ENCODE measurements at regions of chr4 and their contacts with region 1.

Region 1: DNA sequence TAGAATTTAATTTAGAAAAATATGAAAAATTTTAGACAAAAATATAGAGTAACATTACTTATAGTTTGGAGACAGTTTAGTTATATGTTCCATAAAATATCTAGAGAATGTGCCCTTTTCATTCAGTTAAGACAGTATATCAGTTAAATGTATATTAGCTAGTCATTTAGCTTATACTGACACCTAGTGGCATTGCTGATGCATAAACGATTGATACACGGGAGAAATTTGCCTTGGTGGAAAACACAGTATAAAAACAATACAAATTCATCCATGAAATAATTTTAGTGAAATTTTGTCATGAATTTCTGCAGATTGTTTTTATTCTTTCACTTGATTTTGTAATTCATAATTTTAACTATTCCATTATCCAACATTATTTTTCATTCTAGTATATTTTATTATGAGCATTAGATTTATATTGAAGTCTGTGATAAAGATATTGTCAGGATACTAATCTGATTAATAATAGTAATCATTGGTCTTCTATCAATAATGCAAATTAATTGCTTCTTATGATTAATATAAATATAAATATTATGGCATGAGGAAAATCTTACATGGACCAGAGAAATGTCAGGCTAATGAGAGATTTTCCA is 219.0 kb downstream of the TLL1 start:
- DNase-seq: no peak
- ATAC-seq: peak; percentile 78
- H3K4me3 ChIP-seq: no peak overlapping the region
- H3K27ac ChIP-seq: no peak overlapping the region
- H3K4me1 ChIP-seq: no peaks in the 10 kb centered on the region
- H3K27me3 ChIP-seq: no peaks in the 10 kb centered on the region
- CTCF ChIP-seq: peak; percentile 57 to 64 (median 63); a peak in 5 of 6 replicates
- EP300 ChIP-seq: no peak
- POLR2A ChIP-seq: no peak
- RAD21 ChIP-seq: peak; percentile 71

Region 2: DNA sequence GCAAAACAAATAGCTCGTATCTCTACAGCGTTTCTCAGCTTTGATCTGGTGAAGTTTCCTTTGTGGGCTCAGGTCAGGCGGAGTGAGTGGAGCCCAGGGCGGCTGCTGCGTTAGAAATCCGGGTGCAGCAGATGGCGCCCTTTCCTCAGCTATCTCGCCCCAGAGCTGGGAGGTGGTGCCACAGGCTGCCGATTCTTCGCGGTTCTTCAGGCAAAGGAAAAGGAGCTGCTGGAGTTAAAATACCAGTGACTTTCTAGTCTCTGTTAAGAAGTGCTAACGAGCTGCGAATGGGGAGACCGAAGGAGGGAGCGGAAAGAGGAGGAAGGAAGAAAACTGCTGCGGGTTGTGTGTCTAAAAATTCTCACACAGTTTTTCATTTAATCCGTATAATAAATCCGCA is 598.7 kb before region 1 on chr4:
- CTCF ChIA-PET with region 1: interaction called, 40 read pairs
- POLR2A ChIA-PET with region 1: no interaction called
- RAD21 ChIA-PET with region 1: interaction called, 18 read pairs
- SMC1A ChIA-PET with region 1: interaction called, 25 read pairs
- in situ Hi-C with region 1: no loop called
- intact Hi-C with region 1: loop called (anchors 1 kb)
- DNase-seq: no peak
- ATAC-seq: peak; percentile 98
- H3K4me3 ChIP-seq: no peak overlapping the region
- H3K27ac ChIP-seq: no peak overlapping the region
- H3K4me1 ChIP-seq: no peaks in the 10 kb centered on the region
- H3K27me3 ChIP-seq: no peaks in the 10 kb centered on the region
- CTCF ChIP-seq: peak; percentile 68 to 85 (median 73)
- EP300 ChIP-seq: no peak
- POLR2A ChIP-seq: no peak
- RAD21 ChIP-seq: peak; percentile 80

Region 3: GRCh38 chr4:165537028-165537648 is 554.9 kb before region 1 on chr4:
- CTCF ChIA-PET with region 1: interaction called, 34 read pairs
- POLR2A ChIA-PET with region 1: no interaction called
- RAD21 ChIA-PET with region 1: interaction called, 20 read pairs
- SMC1A ChIA-PET with region 1: interaction called, 12 read pairs
- in situ Hi-C with region 1: loop called (anchors 5 kb)
- intact Hi-C with region 1: loop called (anchors 1 kb)
- DNase-seq: no peak
- ATAC-seq: peak; percentile 79
- H3K4me3 ChIP-seq: no peak overlapping the region
- H3K27ac ChIP-seq: no peak overlapping the region
- H3K4me1 ChIP-seq: no peaks in the 10 kb centered on the region
- H3K27me3 ChIP-seq: no peaks in the 10 kb centered on the region; a peak in 1 of 4 replicates
- CTCF ChIP-seq: peak; percentile 45 to 67 (median 54); a peak in 5 of 6 replicates
- EP300 ChIP-seq: no peak
- POLR2A ChIP-seq: no peak
- RAD21 ChIP-seq: peak; percentile 69

Region 4: GRCh38 chr4:165864271-165864670 is 227.7 kb before region 1 on chr4:
- CTCF ChIA-PET with region 1: interaction called, 7 read pairs
- POLR2A ChIA-PET with region 1: no interaction called
- RAD21 ChIA-PET with region 1: interaction called, 5 read pairs
- SMC1A ChIA-PET with region 1: interaction called, 3 read pairs
- in situ Hi-C with region 1: no loop called
- intact Hi-C with region 1: loop called (anchors 5 kb)
- DNase-seq: no peak
- ATAC-seq: peak; percentile 46; the same call in 2 of the 3 replicates
- H3K4me3 ChIP-seq: no peak overlapping the region
- H3K27ac ChIP-seq: no peak overlapping the region
- H3K4me1 ChIP-seq: no peaks in the 10 kb centered on the region
- H3K27me3 ChIP-seq: no peaks in the 10 kb centered on the region; a peak in 1 of 4 replicates
- CTCF ChIP-seq: peak in 2 of 3 experiments; percentile 2 to 11; a peak in 1 of 6 replicates
- EP300 ChIP-seq: no peak
- POLR2A ChIP-seq: no peak
- RAD21 ChIP-seq: no peak

Region 5: DNA sequence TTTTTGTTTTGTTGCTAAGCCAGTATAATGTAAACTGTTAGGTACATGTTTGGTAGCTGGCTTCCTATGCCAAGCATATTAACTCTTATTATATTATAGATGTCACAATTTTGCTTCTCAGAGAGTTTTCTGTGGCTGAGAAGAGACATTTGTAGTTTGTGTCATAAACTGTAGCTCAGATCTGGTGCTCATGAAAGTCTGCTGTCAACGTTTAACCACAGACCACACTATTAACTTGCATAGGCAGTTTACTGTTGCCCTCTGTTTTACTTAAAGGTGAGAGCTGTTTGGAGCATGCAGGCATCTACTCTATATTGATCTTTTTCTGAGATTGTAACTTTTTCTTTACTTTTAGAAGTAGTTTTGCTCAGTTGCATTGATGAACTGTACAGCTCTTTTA is 52.2 kb before region 1 on chr4:
- CTCF ChIA-PET with region 1: interaction called, 56 read pairs
- POLR2A ChIA-PET with region 1: interaction called, 4 read pairs
- RAD21 ChIA-PET with region 1: interaction called, 26 read pairs
- SMC1A ChIA-PET with region 1: interaction called, 43 read pairs
- in situ Hi-C with region 1: no loop called
- intact Hi-C with region 1: loop called (anchors 2 kb)
- DNase-seq: no peak
- ATAC-seq: peak; percentile 72
- H3K4me3 ChIP-seq: no peak overlapping the region
- H3K27ac ChIP-seq: no peak overlapping the region
- H3K4me1 ChIP-seq: no peaks in the 10 kb centered on the region
- H3K27me3 ChIP-seq: no peaks in the 10 kb centered on the region
- CTCF ChIP-seq: no peak
- EP300 ChIP-seq: peak in 1 of 2 experiments; percentile 17; a peak in 1 of 4 replicates
- POLR2A ChIP-seq: no peak
- RAD21 ChIP-seq: no peak

Region 6: GRCh38 chr4:166045457-166045856 is 46.6 kb before region 1 on chr4:
- CTCF ChIA-PET with region 1: interaction called, 56 read pairs
- POLR2A ChIA-PET with region 1: interaction called, 4 read pairs
- RAD21 ChIA-PET with region 1: interaction called, 26 read pairs
- SMC1A ChIA-PET with region 1: interaction called, 43 read pairs
- in situ Hi-C with region 1: no loop called
- intact Hi-C with region 1: loop called (anchors 2 kb)
- DNase-seq: peak; percentile 59
- ATAC-seq: peak; percentile 87
- H3K4me3 ChIP-seq: no peak overlapping the region
- H3K27ac ChIP-seq: no peak overlapping the region
- H3K4me1 ChIP-seq: no peaks in the 10 kb centered on the region
- H3K27me3 ChIP-seq: no peaks in the 10 kb centered on the region
- CTCF ChIP-seq: no peak
- EP300 ChIP-seq: peak; percentile 50 to 70; a peak in 3 of 4 replicates
- POLR2A ChIP-seq: no peak
- RAD21 ChIP-seq: no peak

Region 7: DNA sequence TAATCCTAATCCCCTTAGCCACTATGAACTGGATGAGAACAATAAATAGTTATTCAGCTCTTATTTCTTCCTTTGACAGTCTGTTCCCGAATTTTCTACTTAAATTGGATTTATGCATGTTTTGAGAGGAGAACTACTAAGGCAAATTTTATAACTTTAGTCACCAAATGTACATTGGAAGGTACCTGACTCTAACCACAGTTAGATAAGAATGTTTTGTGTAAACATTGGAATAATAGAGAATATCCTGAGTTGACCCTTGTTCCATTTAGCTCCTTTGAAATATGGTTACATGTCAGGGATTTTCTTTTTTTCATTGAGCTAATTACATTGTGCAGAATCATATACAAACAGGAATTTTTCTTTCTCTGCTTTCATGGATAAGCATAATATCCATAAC is 16.4 kb before region 1 on chr4:
- CTCF ChIA-PET with region 1: interaction called, 5 read pairs
- POLR2A ChIA-PET with region 1: interaction called, 3 read pairs
- RAD21 ChIA-PET with region 1: interaction called, 4 read pairs
- SMC1A ChIA-PET with region 1: interaction called, 14 read pairs
- in situ Hi-C with region 1: no loop called
- intact Hi-C with region 1: no loop called
- DNase-seq: no peak
- ATAC-seq: no peak
- H3K4me3 ChIP-seq: no peak overlapping the region
- H3K27ac ChIP-seq: no peak overlapping the region
- H3K4me1 ChIP-seq: no peaks in the 10 kb centered on the region
- H3K27me3 ChIP-seq: no peaks in the 10 kb centered on the region
- CTCF ChIP-seq: no peak
- EP300 ChIP-seq: no peak
- POLR2A ChIP-seq: no peak
- RAD21 ChIP-seq: no peak